ENCODE measurements at regions of chr5 and their contacts with region 1.

Region 1: DNA sequence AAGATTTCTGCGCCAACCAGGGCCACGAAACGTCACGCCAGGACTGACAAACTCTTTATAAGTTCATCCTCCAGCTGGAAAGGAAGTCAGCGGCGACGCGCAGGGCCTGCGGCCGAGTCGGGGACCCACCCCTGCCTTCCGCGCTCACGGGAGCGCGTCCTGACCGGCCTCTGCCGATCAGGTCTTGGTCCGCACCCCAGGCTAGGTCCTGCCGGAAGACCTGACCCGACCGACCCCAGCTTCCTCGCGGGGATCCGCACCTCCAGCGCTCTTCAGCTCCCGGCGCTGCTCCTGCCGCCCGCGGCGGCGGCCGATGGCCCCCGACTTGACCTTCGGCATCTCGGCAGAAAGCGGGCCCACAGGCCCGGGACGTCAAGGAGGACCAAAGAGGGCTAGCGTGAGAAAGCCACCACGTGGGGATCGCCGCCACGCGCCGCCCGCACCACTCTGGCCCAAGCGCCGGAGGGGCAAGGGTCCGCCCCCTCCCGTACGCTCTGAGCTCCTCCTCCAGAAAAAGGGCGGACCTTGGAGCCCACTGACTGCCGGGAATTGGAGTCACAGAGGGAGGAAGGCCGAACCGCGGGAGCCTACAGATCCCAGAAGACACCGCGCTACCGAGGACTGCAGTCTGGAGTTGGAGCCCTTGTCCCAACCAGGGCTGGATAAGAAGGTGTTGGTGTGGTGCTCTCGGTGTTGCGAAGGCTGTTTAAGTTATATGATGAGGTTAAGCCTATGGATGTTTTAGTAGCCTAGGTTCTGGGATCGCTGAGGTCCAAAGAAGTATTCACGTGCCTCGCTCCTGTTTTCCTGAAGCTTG is at the start of gene DIMT1:
- DNase-seq: peak; percentile 98
- ATAC-seq: peak; percentile 98
- H3K4me3 Mint-ChIP-seq: peak within 1 kb of the TSS; percentile 100
- H3K27ac Mint-ChIP-seq: peak within 1 kb of the TSS; percentile 96
- H3K4me1 Mint-ChIP-seq: peaks cover 27% of the 10 kb centered on the region
- H3K27me3 Mint-ChIP-seq: no peaks in the 10 kb centered on the region
- CTCF ChIP-seq: no peak
- total RNA-seq, gene DIMT1: 51.3 to 59.1 TPM

Region 2: GRCh38 chr5:62385131-62385530 is 18.5 kb before region 1 on chr5:
- CTCF ChIA-PET with region 1: interaction called, 3 read pairs
- POLR2A ChIA-PET with region 1: interaction called, 31 read pairs
- intact Hi-C with region 1: no loop called
- DNase-seq: no peak
- ATAC-seq: no peak
- H3K4me3 Mint-ChIP-seq: no peak overlapping the region
- H3K27ac Mint-ChIP-seq: peak overlapping the region; percentile 51
- H3K4me1 Mint-ChIP-seq: peaks cover 2% of the 10 kb centered on the region
- H3K27me3 Mint-ChIP-seq: no peaks in the 10 kb centered on the region
- CTCF ChIP-seq: no peak

Measured in activated CD8-positive, alpha-beta T cell treated with anti-CD3 and anti-CD28 coated beads for 36 hours (primary cell).